IMR-90 (cell line): ENCODE measurements at regions of chr7 and their contacts with region 1.

Region 1: DNA sequence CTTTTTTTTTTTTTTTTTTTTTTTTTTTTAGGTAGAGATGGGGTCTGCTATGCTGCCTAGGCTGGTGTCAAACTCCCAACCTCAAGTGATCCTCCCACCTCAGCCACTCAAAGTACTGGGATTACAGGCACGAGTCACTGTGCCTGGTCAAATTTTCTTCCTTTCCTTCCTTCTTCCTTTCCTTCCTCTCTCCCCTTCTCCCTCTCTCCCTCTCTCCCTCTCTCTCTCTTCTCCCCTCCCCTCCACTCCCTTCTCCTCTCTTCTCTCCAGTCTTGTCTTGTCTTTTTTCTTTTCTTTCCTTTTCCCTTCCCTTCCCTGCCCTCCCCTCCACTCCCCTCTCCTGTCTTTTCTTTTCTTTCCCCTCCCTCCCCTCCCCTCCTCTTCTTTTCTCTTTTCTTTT is 7.2 kb upstream of the MLXIPL start:
- DNase-seq: no peak
- ATAC-seq: no peak
- H3K4me3 ChIP-seq: no peak overlapping the region
- H3K27ac ChIP-seq: no peak overlapping the region
- H3K4me1 ChIP-seq: peaks cover 4% of the 10 kb centered on the region; the same call in 1 of the 2 replicates
- H3K27me3 ChIP-seq: peaks cover 38% of the 10 kb centered on the region
- CTCF ChIP-seq: no peak
- POLR2A ChIP-seq: no peak
- RAD21 ChIP-seq: no peak

Region 2: GRCh38 chr7:73644688-73645286 is 13.2 kb after region 1 on chr7:
- CTCF ChIA-PET with region 1: no interaction called
- POLR2A ChIA-PET with region 1: interaction called, 14 read pairs
- dilution Hi-C with region 1: no loop called
- in situ Hi-C with region 1: no loop called
- intact Hi-C with region 1: no loop called
- DNase-seq: no peak
- ATAC-seq: no peak
- H3K4me3 ChIP-seq: no peak overlapping the region
- H3K27ac ChIP-seq: no peak overlapping the region
- H3K4me1 ChIP-seq: no peaks in the 10 kb centered on the region; the same call in 1 of the 2 replicates
- H3K27me3 ChIP-seq: peaks cover 66% of the 10 kb centered on the region
- CTCF ChIP-seq: no peak
- POLR2A ChIP-seq: no peak
- RAD21 ChIP-seq: no peak